ENCODE measurements at regions of chr3 and their contacts with region 1.

Region 1: GRCh38 chr3:130892759-130893375 is 1.0 kb upstream of the ATP2C1 start:
- DNase-seq: no peak
- ATAC-seq: peak; percentile 75

Region 2: DNA sequence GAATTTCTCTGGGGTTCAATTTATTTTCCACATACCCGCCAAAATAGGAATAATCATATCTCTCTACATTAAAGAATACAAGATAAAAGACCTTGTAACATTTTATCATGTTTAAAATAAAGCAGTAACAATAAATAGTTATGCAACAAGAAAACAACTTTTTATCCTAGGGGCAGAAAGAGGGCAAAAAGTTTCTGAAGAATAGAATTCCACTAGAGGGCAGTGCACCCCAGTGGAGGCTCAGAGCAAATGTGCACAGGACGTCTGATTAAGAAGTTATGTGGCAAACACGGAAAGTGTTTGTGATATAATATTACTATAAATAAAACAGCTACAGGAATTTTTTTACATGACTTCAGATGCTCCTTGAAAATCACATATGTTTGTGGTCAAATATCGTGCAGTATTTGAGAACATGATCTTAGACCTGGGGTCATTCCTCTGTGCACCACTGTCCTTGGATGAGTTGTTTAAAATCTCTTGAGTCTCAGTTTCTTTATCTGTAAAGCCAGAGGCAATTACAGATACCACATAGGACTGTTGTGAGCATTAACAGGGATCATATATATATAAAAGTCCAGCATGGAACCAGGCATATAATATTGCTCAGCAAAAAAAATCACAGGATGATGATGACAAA is 133.0 kb before region 1 on chr3:
- intact Hi-C with region 1: loop called (anchors 1 kb)
- DNase-seq: no peak
- ATAC-seq: peak; percentile 75

Region 3: DNA sequence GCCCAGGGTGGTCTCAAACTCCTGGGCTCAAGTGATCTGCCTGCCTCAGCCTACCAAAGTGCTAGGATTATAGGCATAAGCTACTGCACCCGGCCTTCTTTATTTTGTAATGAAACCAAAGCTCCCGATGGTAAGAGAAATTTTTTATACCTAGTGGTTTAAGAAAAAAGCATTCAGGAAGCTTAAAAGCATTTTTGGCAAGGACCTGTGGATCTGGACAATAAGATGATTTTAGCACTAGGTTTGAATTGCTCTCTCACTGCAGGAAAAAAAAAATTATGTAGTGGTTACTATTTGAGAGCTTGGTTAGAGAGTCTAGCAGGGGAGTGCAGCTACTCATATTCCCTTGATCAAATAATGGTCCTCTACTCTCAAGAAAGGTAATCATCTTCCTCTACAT is 81.3 kb before region 1 on chr3:
- intact Hi-C with region 1: no loop called
- DNase-seq: no peak
- ATAC-seq: no peak

Region 4: DNA sequence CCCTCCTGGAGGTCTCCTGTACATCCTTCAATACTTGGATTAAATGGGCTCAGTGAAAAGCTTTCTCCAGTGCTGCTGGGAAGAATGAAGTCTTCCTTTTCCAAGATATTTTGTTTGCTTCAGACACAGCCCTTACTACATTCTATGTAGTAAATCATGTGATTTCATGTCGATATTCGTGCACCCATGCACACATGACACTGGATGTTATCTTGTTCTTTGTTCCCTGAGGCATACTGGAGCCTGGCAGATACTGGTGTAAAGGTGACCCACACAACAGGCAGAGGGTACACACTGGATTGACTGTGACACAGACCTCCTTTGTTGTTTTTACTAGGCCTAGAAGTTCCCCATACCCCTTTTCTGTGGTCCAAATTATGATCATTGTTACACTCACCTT is 39.3 kb before region 1 on chr3:
- intact Hi-C with region 1: loop called (anchors 2 kb)
- DNase-seq: no peak
- ATAC-seq: no peak

Region 5: DNA sequence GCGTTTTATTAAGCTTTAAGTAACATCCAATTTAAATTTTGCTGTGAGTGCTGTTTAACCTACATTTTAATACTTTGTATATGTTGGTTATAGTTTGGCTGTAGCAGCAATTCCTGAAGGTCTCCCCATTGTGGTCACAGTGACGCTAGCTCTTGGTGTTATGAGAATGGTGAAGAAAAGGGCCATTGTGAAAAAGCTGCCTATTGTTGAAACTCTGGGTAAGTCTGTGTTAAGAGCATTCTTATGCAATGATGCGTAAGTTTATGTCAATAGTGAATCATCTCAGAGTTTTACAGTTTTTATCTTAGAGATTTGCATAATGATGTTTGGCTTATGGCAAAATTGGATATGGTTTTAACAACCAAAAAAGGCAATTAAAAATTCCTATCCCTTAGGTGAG is 71.0 kb after region 1 on chr3:
- intact Hi-C with region 1: loop called (anchors 5 kb)
- DNase-seq: no peak
- ATAC-seq: no peak

Region 6: DNA sequence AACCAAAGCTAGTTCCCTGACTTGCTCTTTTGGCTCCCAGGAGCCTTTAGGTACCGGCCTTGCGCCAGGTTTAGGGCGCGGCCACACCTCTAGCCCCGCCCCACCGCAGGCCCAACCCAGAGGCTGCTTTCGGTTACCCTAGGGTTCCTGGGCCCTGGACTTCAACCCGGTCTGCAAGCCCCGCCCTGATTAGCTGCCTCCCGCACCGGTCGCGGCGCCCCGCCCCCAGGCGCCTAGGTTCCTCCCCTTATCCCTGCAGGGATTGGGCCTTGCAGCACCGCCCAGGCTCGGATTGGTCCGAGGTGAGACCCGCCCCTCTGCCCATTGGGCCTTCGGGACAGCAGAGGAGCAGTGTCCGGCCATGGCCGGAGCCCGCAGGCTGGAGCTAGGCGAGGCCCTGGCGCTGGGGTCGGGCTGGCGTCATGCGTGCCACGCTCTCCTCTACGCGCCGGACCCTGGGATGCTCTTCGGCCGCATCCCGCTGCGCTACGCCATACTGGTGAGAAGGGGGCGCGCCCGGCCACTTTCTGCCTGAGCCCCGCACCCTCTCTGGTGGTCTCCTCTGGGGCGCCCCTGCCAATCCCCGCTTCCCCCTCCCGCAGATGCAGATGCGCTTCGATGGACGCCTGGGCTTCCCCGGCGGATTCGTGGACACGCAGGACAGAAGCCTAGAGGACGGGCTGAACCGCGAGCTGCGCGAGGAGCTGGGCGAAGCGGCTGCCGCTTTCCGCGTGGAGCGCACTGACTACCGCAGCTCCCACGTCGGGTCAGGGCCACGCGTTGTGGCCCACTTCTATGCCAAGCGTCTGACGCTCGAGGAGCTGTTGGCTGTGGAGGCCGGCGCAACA is 488.8 kb after region 1 on chr3 and contains the start of gene NUDT16:
- intact Hi-C with region 1: loop called (anchors 5 kb)
- DNase-seq: peak; percentile 100
- ATAC-seq: peak; percentile 99
- total RNA-seq, gene NUDT16: 23.3 TPM

Measured in Right ventricle myocardium inferior (tissue), 1 donor.